MCF 10A (cell line): ENCODE measurements at regions of chr20 and their contacts with region 1.

Region 1: GRCh38 chr20:31723319-31724078 is 831 bp upstream of the BCL2L1 start:
- DNase-seq: peak; percentile 96
- H3K4me3 Mint-ChIP-seq: peak overlapping the region; percentile 91
- H3K27ac Mint-ChIP-seq: peak overlapping the region; percentile 93
- H3K4me1 Mint-ChIP-seq: peaks cover 40% of the 10 kb centered on the region
- H3K27me3 Mint-ChIP-seq: no peaks in the 10 kb centered on the region
- CTCF ChIP-seq: peak; percentile 82

Region 2: DNA sequence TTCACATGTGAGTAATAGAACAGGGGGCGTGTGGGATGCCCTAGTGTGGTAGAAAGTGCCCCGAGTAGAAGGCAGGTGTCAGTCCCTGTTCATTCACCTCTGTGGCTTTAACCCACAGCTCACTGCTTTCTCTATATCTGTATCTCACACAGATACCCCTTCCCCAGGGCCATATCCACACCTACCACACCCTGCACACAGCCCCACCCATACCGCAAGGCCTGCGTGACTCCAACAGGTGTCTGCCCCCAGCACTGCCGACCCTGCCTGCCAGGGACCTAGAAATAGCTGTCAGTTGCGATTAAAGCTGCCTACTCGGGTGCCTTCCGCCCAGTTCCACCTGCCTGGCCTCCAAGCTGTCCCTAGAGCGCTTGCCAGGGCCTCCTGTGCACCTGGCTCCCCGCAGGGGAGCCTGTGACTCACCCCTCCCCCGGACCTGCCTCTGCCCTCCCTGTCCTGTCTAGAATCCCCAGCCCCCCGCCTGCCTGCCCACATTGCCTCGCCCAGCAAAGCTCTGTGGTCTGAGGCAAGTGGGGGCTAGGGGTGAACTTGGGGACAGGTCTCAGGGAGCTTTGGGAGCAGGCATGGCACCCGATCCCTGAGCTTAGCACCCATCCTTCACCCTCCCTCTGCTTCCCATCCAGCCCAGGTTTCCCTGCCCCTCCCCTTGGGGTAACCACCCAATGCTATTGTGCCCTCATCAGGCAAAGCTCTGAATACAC is 156.7 kb before region 1 on chr20:
- CTCF ChIA-PET with region 1: interaction called, 35 read pairs
- POLR2A ChIA-PET with region 1: interaction called, 8 read pairs
- intact Hi-C with region 1: no loop called
- DNase-seq: peak; percentile 88
- H3K4me3 Mint-ChIP-seq: no peak overlapping the region
- H3K27ac Mint-ChIP-seq: peak overlapping the region; percentile 42
- H3K4me1 Mint-ChIP-seq: peaks cover 37% of the 10 kb centered on the region
- H3K27me3 Mint-ChIP-seq: no peaks in the 10 kb centered on the region
- CTCF ChIP-seq: no peak

Region 3: GRCh38 chr20:31630187-31630790 is 93.2 kb before region 1 on chr20:
- CTCF ChIA-PET with region 1: interaction called, 142 read pairs
- POLR2A ChIA-PET with region 1: interaction called, 28 read pairs
- intact Hi-C with region 1: loop called (anchors 1 kb)
- DNase-seq: peak; percentile 63
- H3K4me3 Mint-ChIP-seq: no peak overlapping the region
- H3K27ac Mint-ChIP-seq: no peak overlapping the region
- H3K4me1 Mint-ChIP-seq: no peaks in the 10 kb centered on the region
- H3K27me3 Mint-ChIP-seq: no peaks in the 10 kb centered on the region
- CTCF ChIP-seq: no peak

Region 4: DNA sequence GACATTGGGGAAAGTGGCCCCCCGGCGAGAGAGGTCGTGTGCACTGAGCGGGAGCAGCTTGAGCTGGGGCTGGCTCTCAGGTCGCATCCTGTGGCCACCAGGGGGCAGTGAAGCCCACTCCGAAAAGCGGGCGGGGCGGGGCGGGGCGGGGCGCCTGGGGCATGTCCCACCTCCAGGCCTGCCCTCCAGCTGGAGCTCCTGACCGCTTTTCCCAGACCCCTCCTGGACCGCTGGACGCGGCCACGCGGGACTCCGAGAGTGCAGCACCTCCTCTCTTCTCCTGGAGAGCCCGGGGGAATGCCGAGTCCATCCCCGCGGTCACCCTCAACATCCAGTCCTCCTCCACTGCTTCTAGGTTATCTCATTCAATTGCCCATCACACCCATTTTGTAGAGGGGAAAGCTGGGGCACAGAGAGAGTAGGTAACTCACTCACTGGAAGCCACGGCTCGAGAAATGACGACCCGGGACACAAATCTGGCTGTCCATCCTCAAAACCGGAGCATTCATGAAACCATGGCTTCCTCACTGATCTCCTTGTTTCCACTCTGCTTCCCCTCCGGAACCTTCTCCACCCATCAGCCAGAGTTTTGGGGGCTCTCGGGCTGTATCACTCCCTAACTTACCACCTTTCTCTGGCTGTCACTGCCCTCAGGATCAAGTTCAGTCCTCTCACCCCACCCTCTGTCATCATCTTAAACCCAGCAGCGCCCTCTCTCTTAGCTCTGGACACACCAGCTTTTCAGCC is 61.7 kb before region 1 on chr20:
- CTCF ChIA-PET with region 1: interaction called, 626 read pairs
- POLR2A ChIA-PET with region 1: interaction called, 259 read pairs
- intact Hi-C with region 1: loop called (anchors 1 kb)
- DNase-seq: peak; percentile 71
- H3K4me3 Mint-ChIP-seq: peak overlapping the region; percentile 58
- H3K27ac Mint-ChIP-seq: no peak overlapping the region
- H3K4me1 Mint-ChIP-seq: peaks cover 19% of the 10 kb centered on the region
- H3K27me3 Mint-ChIP-seq: no peaks in the 10 kb centered on the region
- CTCF ChIP-seq: peak; percentile 75

Region 5: DNA sequence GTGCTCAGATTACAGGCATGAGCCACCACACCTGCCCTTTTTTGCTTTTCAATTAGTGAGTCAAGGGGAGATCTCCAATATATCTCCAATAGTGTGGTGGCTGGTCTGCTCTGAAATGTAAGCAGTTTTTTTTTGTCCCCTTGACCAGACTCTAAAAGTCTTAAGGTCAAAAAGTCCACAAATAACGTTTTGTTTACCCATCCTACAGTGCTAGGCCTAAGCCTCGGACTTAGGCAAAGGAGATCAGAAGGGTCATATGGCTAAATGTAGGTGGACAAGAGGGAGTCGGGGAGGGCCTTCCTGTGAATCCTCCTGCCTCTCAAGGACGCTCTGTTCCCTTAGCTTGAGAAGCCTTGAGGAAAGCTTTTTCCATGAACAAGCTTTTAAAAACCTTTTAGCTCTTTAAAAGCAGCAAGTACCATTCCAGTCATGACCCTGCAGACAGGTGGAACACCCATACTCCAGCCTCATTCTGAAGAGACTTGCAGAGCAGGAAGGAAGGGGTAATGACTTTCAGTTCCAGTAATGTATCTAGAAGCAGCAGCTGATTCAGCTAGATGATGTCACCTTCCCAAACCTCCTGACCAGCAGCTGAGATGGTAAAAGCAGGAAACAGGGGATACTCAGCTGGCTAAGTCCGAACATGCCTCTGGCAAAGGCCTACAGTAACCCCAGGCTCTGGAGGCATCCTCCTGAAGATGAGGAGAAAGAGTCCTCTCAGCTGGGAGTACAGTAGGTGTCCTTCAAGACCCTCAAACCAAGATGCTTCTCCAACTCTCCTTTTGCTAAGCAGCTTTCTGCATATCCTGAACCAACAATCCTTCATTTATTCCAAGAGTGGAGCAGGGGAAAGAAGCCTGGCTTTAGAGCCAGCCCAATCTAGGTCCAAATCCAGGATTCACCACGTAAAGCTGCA is 24.4 kb before region 1 on chr20:
- CTCF ChIA-PET with region 1: interaction called, 429 read pairs
- POLR2A ChIA-PET with region 1: interaction called, 491 read pairs
- intact Hi-C with region 1: loop called (anchors 1 kb)
- DNase-seq: peak; percentile 76
- H3K4me3 Mint-ChIP-seq: peak overlapping the region; percentile 52
- H3K27ac Mint-ChIP-seq: peak overlapping the region; percentile 97
- H3K4me1 Mint-ChIP-seq: peaks cover 55% of the 10 kb centered on the region
- H3K27me3 Mint-ChIP-seq: no peaks in the 10 kb centered on the region
- CTCF ChIP-seq: no peak

Region 6: DNA sequence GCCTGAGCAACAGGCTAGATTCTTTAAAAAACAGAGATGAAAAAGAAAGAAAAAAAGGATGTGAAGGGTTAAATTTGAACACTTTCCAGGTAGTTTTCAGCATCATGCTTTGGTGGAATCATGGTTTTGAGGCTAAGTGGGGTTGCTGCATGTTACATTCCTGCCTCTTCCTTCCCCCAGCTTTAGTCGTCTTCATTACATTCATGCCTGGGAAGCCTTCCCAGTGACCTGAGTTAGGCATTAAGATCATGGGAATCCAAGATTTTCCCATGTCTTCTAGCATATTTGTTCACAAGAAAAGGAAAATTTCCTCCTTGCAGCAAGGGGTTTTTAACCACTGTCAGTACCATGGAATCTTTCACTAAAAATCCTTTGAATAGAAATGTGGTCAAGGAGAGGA is 27.6 kb after region 1 on chr20:
- CTCF ChIA-PET with region 1: interaction called, 11 read pairs
- POLR2A ChIA-PET with region 1: interaction called, 4 read pairs
- intact Hi-C with region 1: no loop called
- DNase-seq: no peak
- H3K4me3 Mint-ChIP-seq: no peak overlapping the region
- H3K27ac Mint-ChIP-seq: peak overlapping the region; percentile 70
- H3K4me1 Mint-ChIP-seq: peaks cover 22% of the 10 kb centered on the region
- H3K27me3 Mint-ChIP-seq: no peaks in the 10 kb centered on the region
- CTCF ChIP-seq: no peak

Region 7: DNA sequence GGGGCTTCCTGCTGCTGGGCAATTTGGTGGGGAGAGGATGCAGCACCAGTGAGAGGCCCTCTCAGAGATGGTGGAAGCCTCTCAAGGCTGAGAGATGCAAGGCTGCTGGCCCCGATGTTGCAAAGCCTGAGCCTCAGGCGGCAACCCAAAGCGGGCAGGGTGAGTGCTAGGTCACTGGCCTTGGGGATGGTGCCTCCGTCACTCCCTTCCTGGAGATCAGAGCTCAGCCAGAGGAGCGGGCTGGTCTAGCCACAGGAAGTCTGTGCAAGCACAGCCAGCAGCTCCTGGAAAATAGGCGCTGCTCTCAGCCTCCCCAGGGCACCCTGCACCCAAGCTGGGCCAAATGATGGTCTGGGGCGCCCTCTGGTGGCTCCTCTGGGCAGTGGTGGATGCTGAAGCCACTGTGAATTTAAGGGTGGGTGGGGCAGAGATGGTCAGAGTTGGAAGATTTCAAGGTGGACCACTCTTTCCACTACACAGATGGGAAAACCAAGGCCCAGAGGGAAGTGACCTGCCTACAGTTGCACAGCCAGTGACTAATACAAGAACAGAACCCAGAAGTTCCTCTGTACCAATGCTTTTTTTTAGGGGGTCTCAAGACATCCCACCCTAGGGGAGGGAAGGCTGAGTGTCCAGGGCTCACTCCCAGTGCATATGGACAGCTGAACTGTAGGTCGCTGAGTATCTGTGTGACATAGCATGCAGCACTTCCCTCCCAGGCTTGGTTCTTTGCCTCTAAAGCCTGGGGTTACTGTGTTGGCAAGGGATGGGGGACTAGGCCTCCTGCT is 929.4 kb after region 1 on chr20:
- CTCF ChIA-PET with region 1: no interaction called
- POLR2A ChIA-PET with region 1: no interaction called
- intact Hi-C with region 1: loop called (anchors 5 kb)
- DNase-seq: peak; percentile 84
- H3K4me3 Mint-ChIP-seq: no peak overlapping the region
- H3K27ac Mint-ChIP-seq: no peak overlapping the region
- H3K4me1 Mint-ChIP-seq: peaks cover 3% of the 10 kb centered on the region
- H3K27me3 Mint-ChIP-seq: no peaks in the 10 kb centered on the region
- CTCF ChIP-seq: peak; percentile 94

Region 8: GRCh38 chr20:33584976-33585375 is 1861.5 kb after region 1 on chr20:
- CTCF ChIA-PET with region 1: no interaction called
- POLR2A ChIA-PET with region 1: no interaction called
- intact Hi-C with region 1: no loop called
- DNase-seq: no peak
- H3K4me3 Mint-ChIP-seq: no peak overlapping the region
- H3K27ac Mint-ChIP-seq: no peak overlapping the region
- H3K4me1 Mint-ChIP-seq: peaks cover 25% of the 10 kb centered on the region
- H3K27me3 Mint-ChIP-seq: no peaks in the 10 kb centered on the region
- CTCF ChIP-seq: no peak